H1 (cell line): ENCODE measurements at regions of chr2 and their contacts with region 1.

Region 1: DNA sequence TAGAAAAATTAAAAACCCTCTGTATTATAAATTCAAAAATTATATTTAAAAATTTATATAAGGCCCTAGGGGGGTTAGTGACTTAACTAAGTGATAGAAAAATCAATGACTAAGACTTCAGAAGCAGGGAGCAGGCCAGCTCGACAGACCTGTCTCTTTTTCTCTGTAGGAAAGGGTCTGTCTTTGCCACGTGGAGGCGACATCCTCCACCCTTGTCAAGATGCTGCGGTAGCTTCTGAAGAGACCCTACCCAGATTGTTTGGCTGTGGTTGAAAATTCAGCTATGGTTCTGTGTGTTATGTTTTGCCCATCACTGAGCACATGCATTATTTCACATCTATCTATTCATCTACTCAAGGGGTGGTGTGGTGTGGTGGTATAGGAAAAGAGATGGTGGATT is 8.2 kb upstream of the SLC4A3 start:
- DNase-seq: no peak
- H3K4me3 ChIP-seq: no peak overlapping the region
- H3K27ac ChIP-seq: no peak overlapping the region
- H3K4me1 ChIP-seq: no peaks in the 10 kb centered on the region
- H3K27me3 ChIP-seq: no peaks in the 10 kb centered on the region
- CTCF ChIP-seq: peak; percentile 58 to 80 (median 63)
- EP300 ChIP-seq: no peak
- POLR2A ChIP-seq: no peak
- RAD21 ChIP-seq: peak; percentile 75 to 84

Region 2: DNA sequence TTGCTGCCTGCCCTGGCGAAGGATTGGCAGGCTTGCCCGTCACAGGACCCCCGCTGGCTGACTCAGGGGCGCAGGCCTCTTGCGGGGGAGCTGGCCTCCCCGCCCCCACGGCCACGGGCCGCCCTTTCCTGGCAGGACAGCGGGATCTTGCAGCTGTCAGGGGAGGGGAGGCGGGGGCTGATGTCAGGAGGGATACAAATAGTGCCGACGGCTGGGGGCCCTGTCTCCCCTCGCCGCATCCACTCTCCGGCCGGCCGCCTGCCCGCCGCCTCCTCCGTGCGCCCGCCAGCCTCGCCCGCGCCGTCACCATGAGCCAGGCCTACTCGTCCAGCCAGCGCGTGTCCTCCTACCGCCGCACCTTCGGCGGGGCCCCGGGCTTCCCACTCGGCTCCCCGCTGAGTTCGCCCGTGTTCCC is 201.1 kb before region 1 on chr2 and contains the start of gene DES:
- CTCF ChIA-PET with region 1: no interaction called
- POLR2A ChIA-PET with region 1: no interaction called
- DNase-seq: no peak
- H3K4me3 ChIP-seq: peak within 1 kb of the TSS in 2 of 4 experiments; percentile 2 to 51; a peak in 3 of 8 replicates
- H3K27ac ChIP-seq: no peak within 1 kb of the TSS
- H3K4me1 ChIP-seq: peaks cover 8 to 26% (median 15%) of the 10 kb centered on the region in 4 experiments
- H3K27me3 ChIP-seq: peaks cover 15 to 36% (median 29%) of the 10 kb centered on the region in 4 experiments
- CTCF ChIP-seq: no peak
- EP300 ChIP-seq: no peak
- POLR2A ChIP-seq: no peak
- RAD21 ChIP-seq: no peak
- total RNA-seq, gene DES: 1.5 and 1.8 TPM in 2 replicates

Region 3: GRCh38 chr2:219726916-219727315 is 107.7 kb after region 1 on chr2:
- CTCF ChIA-PET with region 1: interaction called, 11 read pairs
- POLR2A ChIA-PET with region 1: no interaction called
- DNase-seq: no peak
- H3K4me3 ChIP-seq: no peak overlapping the region
- H3K27ac ChIP-seq: no peak overlapping the region
- H3K4me1 ChIP-seq: peaks cover 0 to 4% (median 1%) of the 10 kb centered on the region in 4 experiments; a peak in 2 of 7 replicates
- H3K27me3 ChIP-seq: no peaks in the 10 kb centered on the region
- CTCF ChIP-seq: peak; percentile 23 to 62 (median 53); a peak in 3 of 4 replicates
- EP300 ChIP-seq: no peak
- POLR2A ChIP-seq: no peak
- RAD21 ChIP-seq: peak; percentile 78 to 82